ENCODE measurements at regions of chr17 and their contacts with region 1.

Region 1: GRCh38 chr17:28118362-28118761 is 75.9 kb downstream of the NLK start:
- DNase-seq: no peak
- ATAC-seq: peak; percentile 37; the same call in 2 of the 3 replicates
- H3K4me3 ChIP-seq: no peak overlapping the region
- H3K27ac ChIP-seq: peak overlapping the region; percentile 6; the same call in 1 of the 2 replicates
- H3K4me1 ChIP-seq: peaks cover 8% of the 10 kb centered on the region
- H3K27me3 ChIP-seq: no peaks in the 10 kb centered on the region
- CTCF ChIP-seq: no peak
- EP300 ChIP-seq: no peak
- POLR2A ChIP-seq: no peak
- RAD21 ChIP-seq: no peak

Region 2: GRCh38 chr17:28047806-28048205 is 70.6 kb before region 1 on chr17:
- CTCF ChIA-PET with region 1: no interaction called
- POLR2A ChIA-PET with region 1: no interaction called
- RAD21 ChIA-PET with region 1: no interaction called
- SMC1A ChIA-PET with region 1: interaction called, 3 read pairs
- in situ Hi-C with region 1: no loop called
- intact Hi-C with region 1: loop called (anchors 5 kb)
- DNase-seq: no peak
- ATAC-seq: no peak
- H3K4me3 ChIP-seq: peak overlapping the region; percentile 2; the same call in 1 of the 2 replicates
- H3K27ac ChIP-seq: no peak overlapping the region
- H3K4me1 ChIP-seq: peaks cover 17% of the 10 kb centered on the region
- H3K27me3 ChIP-seq: no peaks in the 10 kb centered on the region
- CTCF ChIP-seq: no peak
- EP300 ChIP-seq: no peak
- POLR2A ChIP-seq: no peak
- RAD21 ChIP-seq: no peak

Region 3: DNA sequence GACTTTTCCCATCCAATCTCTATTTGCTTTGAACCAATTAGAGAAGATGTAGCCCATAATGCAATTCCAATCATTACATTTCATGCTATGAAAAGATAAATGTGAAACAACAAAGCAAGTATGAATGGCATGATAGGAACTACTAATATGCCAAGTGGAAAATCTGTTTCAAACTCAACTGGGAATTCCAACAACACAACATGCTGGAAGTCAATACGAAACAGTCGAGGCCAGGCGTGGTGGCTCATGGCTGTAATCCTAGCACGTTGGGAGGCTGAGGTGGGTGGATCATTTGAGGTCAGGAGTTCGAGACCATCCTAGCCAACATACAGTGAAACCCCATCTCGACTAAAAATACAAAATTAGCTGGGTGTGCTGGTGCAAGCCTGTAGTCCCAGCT is 161.1 kb after region 1 on chr17:
- CTCF ChIA-PET with region 1: no interaction called
- POLR2A ChIA-PET with region 1: no interaction called
- RAD21 ChIA-PET with region 1: no interaction called
- SMC1A ChIA-PET with region 1: no interaction called
- in situ Hi-C with region 1: no loop called
- intact Hi-C with region 1: no loop called
- DNase-seq: no peak
- ATAC-seq: no peak
- H3K4me3 ChIP-seq: no peak overlapping the region
- H3K27ac ChIP-seq: no peak overlapping the region
- H3K4me1 ChIP-seq: peaks cover 1% of the 10 kb centered on the region; the same call in 1 of the 2 replicates
- H3K27me3 ChIP-seq: no peaks in the 10 kb centered on the region
- CTCF ChIP-seq: no peak
- EP300 ChIP-seq: no peak
- POLR2A ChIP-seq: no peak
- RAD21 ChIP-seq: no peak